ENCODE measurements at regions of chr2 and their contacts with region 1.

Region 1: GRCh38 chr2:218301176-218301819 is 9.0 kb upstream of the TMBIM1 start:
- DNase-seq: peak; percentile 90
- ATAC-seq: peak; percentile 94
- H3K4me3 ChIP-seq: no peak overlapping the region
- H3K4me3 Mint-ChIP-seq: no peak overlapping the region
- H3K27ac ChIP-seq: no peak overlapping the region
- H3K27ac Mint-ChIP-seq: no peak overlapping the region
- H3K4me1 ChIP-seq: peaks cover 3 to 6% of the 10 kb centered on the region in 2 donors
- H3K4me1 Mint-ChIP-seq: peaks cover 7% of the 10 kb centered on the region
- H3K27me3 ChIP-seq: no peaks in the 10 kb centered on the region
- H3K27me3 Mint-ChIP-seq: no peaks in the 10 kb centered on the region
- CTCF ChIP-seq: peak; percentile 90

Region 2: GRCh38 chr2:218286570-218287459 is 14.5 kb before region 1 on chr2:
- CTCF ChIA-PET with region 1: interaction called, 22 read pairs
- POLR2A ChIA-PET with region 1: interaction called, 6 read pairs
- intact Hi-C with region 1: loop called (anchors 1 kb)
- DNase-seq: peak; percentile 94
- ATAC-seq: peak; percentile 56
- H3K4me3 ChIP-seq: peak overlapping the region; percentile 26 to 64 (median 54)
- H3K4me3 Mint-ChIP-seq: peak overlapping the region; percentile 86
- H3K27ac ChIP-seq: peak overlapping the region; percentile 97 to 99
- H3K27ac Mint-ChIP-seq: peak overlapping the region; percentile 96
- H3K4me1 ChIP-seq: peaks cover 79 to 98% of the 10 kb centered on the region in 2 donors
- H3K4me1 Mint-ChIP-seq: peaks cover 86% of the 10 kb centered on the region
- H3K27me3 ChIP-seq: no peaks in the 10 kb centered on the region
- H3K27me3 Mint-ChIP-seq: no peaks in the 10 kb centered on the region
- CTCF ChIP-seq: no peak

Region 3: GRCh38 chr2:218329027-218329825 is 27.9 kb after region 1 on chr2:
- CTCF ChIA-PET with region 1: interaction called, 14 read pairs
- POLR2A ChIA-PET with region 1: no interaction called
- intact Hi-C with region 1: no loop called
- DNase-seq: no peak
- ATAC-seq: peak; percentile 53
- H3K4me3 ChIP-seq: no peak overlapping the region
- H3K4me3 Mint-ChIP-seq: peak overlapping the region; percentile 68
- H3K27ac ChIP-seq: peak overlapping the region; percentile 4 to 41
- H3K27ac Mint-ChIP-seq: peak overlapping the region; percentile 84
- H3K4me1 ChIP-seq: peaks cover 20 to 31% of the 10 kb centered on the region in 2 donors
- H3K4me1 Mint-ChIP-seq: peaks cover 46% of the 10 kb centered on the region
- H3K27me3 ChIP-seq: peaks cover 0 to 2% (median under 1%) of the 10 kb centered on the region in 4 experiments
- H3K27me3 Mint-ChIP-seq: peaks cover 3% of the 10 kb centered on the region
- CTCF ChIP-seq: no peak

Region 4: DNA sequence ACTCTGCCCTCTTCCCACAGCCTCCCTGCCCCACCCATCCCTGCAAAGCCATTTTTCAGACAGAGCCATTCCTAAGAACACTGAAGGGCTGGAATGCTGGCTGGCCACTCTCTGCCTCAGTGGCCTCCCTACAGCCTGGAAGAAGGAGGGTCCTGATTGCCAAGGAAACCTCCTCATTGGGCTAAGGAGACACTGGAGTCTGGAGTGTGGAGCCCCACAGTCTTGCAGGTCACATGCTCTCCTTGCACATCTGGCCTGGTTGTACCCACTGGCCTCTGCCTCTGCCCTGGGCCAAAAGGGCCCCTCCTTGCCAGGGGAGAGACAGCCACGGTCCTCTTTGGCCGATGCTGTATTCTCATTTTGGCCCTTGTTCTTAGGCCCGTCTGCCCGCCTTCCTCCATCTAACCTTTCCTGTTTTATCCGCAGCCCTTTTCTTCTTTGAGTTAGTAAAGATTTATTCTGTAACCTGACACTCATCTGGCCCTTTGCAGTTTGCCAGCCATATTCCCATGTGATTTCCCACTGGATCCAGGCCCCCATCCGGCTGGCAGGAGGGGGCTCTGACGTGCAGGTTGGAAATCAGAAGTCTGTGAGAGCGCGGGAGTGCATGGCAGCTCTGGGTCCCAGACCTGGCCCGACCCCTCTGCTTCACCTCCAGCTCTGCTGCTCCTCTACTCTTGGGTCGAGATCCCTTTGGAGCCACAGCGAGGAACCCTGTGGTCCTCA is 44.4 kb after region 1 on chr2:
- CTCF ChIA-PET with region 1: no interaction called
- POLR2A ChIA-PET with region 1: no interaction called
- intact Hi-C with region 1: no loop called
- DNase-seq: no peak
- ATAC-seq: no peak
- H3K4me3 ChIP-seq: no peak overlapping the region
- H3K4me3 Mint-ChIP-seq: no peak overlapping the region
- H3K27ac ChIP-seq: no peak overlapping the region
- H3K27ac Mint-ChIP-seq: no peak overlapping the region
- H3K4me1 ChIP-seq: no peaks in the 10 kb centered on the region
- H3K4me1 Mint-ChIP-seq: no peaks in the 10 kb centered on the region
- H3K27me3 ChIP-seq: no peaks in the 10 kb centered on the region
- H3K27me3 Mint-ChIP-seq: no peaks in the 10 kb centered on the region
- CTCF ChIP-seq: no peak

Region 5: GRCh38 chr2:218466016-218466521 is 164.8 kb after region 1 on chr2:
- CTCF ChIA-PET with region 1: interaction called, 6 read pairs
- POLR2A ChIA-PET with region 1: no interaction called
- intact Hi-C with region 1: loop called (anchors 1 kb)
- DNase-seq: peak; percentile 30
- ATAC-seq: no peak
- H3K4me3 ChIP-seq: no peak overlapping the region
- H3K4me3 Mint-ChIP-seq: no peak overlapping the region
- H3K27ac ChIP-seq: no peak overlapping the region
- H3K27ac Mint-ChIP-seq: no peak overlapping the region
- H3K4me1 ChIP-seq: peaks cover 12 to 13% of the 10 kb centered on the region in 2 donors
- H3K4me1 Mint-ChIP-seq: peaks cover 17% of the 10 kb centered on the region
- H3K27me3 ChIP-seq: no peaks in the 10 kb centered on the region
- H3K27me3 Mint-ChIP-seq: no peaks in the 10 kb centered on the region
- CTCF ChIP-seq: peak; percentile 51

Measured in B cell (primary cell).